Gastrocnemius medialis (tissue), 4 donors: ENCODE measurements at regions of chr21 and their contacts with region 1.

Region 1: GRCh38 chr21:38819714-38820183 is 14.0 kb downstream of the ETS2 start:
- DNase-seq: no peak
- ATAC-seq: no peak
- H3K4me3 ChIP-seq: no peak overlapping the region
- H3K27ac ChIP-seq: peak overlapping the region; percentile 77 to 88 (median 83)
- H3K4me1 ChIP-seq: peaks cover 27 to 32% of the 10 kb centered on the region in 2 donors
- H3K27me3 ChIP-seq: no peaks in the 10 kb centered on the region
- CTCF ChIP-seq: no peak
- POLR2A ChIP-seq: no peak

Region 2: DNA sequence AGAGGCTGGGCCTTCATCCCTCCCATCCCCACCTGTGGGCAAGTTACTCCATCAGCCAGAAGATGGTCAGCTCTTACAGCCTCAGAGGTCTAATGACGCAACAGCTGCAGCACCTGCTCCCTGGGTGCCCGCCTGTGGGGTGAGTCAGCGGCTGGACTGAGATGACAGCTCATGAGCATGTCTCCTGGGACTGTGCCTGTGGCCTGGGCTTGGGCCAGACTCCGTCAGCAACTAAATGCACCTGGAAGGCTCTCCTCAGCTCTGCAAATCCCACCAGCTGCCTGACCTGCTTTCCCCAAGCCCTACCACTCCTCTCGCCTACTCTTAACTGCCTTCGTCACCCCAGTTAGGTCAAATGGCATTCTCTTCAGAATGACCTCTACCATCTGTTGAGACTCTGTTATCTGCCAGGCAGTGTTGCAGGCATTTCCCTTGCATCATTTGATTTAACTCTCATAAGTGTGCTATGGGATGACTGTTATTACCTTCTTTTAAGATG is 33.7 kb after region 1 on chr21:
- in situ Hi-C with region 1: no loop called
- intact Hi-C with region 1: loop called (anchors 1 kb)
- DNase-seq: peak; percentile 96 to 99
- ATAC-seq: peak; percentile 87 to 88
- H3K4me3 ChIP-seq: no peak overlapping the region
- H3K27ac ChIP-seq: peak overlapping the region; percentile 86 to 88 (median 86)
- H3K4me1 ChIP-seq: peaks cover 22 to 43% of the 10 kb centered on the region in 2 donors
- H3K27me3 ChIP-seq: no peaks in the 10 kb centered on the region
- CTCF ChIP-seq: no peak
- POLR2A ChIP-seq: peak in 1 of 2 donors; percentile 19

Region 3: GRCh38 chr21:38897532-38898422 is 78.0 kb after region 1 on chr21:
- in situ Hi-C with region 1: loop called in 1 of 4 experiments (anchors 10 kb)
- intact Hi-C with region 1: loop called (anchors 2 kb)
- DNase-seq: peak; percentile 47 to 64
- ATAC-seq: peak; percentile 79 to 89
- H3K4me3 ChIP-seq: peak overlapping the region in 1 of 4 donors; percentile 2
- H3K27ac ChIP-seq: peak overlapping the region; percentile 89 to 95 (median 92)
- H3K4me1 ChIP-seq: peaks cover 31 to 33% of the 10 kb centered on the region in 2 donors
- H3K27me3 ChIP-seq: no peaks in the 10 kb centered on the region
- CTCF ChIP-seq: no peak
- POLR2A ChIP-seq: peak; percentile 41 to 68

Region 4: GRCh38 chr21:38903690-38904139 is 84.0 kb after region 1 on chr21:
- in situ Hi-C with region 1: loop called in 1 of 4 experiments (anchors 10 kb)
- intact Hi-C with region 1: loop called (anchors 1 kb)
- DNase-seq: peak; percentile 74 to 85
- ATAC-seq: peak; percentile 50 to 56
- H3K4me3 ChIP-seq: no peak overlapping the region
- H3K27ac ChIP-seq: peak overlapping the region; percentile 88 to 95 (median 92)
- H3K4me1 ChIP-seq: peaks cover 45 to 46% of the 10 kb centered on the region in 2 donors
- H3K27me3 ChIP-seq: no peaks in the 10 kb centered on the region
- CTCF ChIP-seq: no peak
- POLR2A ChIP-seq: peak; percentile 53 to 69

Region 5: DNA sequence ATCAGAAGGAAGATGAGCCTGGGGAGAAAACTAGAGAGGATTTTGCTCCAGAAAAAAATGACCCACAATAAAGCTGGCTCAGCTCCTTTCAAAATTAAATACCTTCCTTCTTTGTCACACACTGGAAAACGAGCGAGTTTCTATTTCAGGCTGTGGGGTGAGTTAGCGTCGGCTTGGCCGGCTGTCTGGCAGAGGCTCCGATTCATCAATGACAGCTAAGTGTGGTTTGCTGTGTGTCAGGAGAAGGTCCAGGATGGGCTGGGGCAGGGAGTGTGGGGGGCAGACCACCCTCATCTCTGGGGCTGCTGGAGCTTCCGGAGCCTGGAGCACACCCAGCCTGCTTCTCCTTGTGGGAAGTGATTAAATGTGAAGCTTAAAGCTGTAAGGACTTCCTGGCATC is 106.2 kb after region 1 on chr21:
- in situ Hi-C with region 1: no loop called
- intact Hi-C with region 1: no loop called
- DNase-seq: peak; percentile 62 to 74
- ATAC-seq: peak; percentile 96 to 98
- H3K4me3 ChIP-seq: peak overlapping the region; percentile 26 to 38 (median 34)
- H3K27ac ChIP-seq: peak overlapping the region; percentile 69 to 78 (median 75)
- H3K4me1 ChIP-seq: peaks cover 17% of the 10 kb centered on the region in 2 donors
- H3K27me3 ChIP-seq: no peaks in the 10 kb centered on the region
- CTCF ChIP-seq: no peak
- POLR2A ChIP-seq: peak in 1 of 2 donors; percentile 19